Activated CD4-positive, alpha-beta T cell treated with anti-CD3 and anti-CD28 coated beads for 36 hours (primary cell): ENCODE measurements at regions of chr2 and their contacts with region 1.

Region 1: GRCh38 chr2:7427293-7428060 is 510.3 kb downstream of the RNF144A start:
- DNase-seq: no peak
- ATAC-seq: no peak
- H3K4me3 Mint-ChIP-seq: no peak overlapping the region
- H3K27ac Mint-ChIP-seq: peak overlapping the region; percentile 51
- H3K4me1 Mint-ChIP-seq: peaks cover 41% of the 10 kb centered on the region
- H3K27me3 Mint-ChIP-seq: peaks cover 9% of the 10 kb centered on the region

Region 2: DNA sequence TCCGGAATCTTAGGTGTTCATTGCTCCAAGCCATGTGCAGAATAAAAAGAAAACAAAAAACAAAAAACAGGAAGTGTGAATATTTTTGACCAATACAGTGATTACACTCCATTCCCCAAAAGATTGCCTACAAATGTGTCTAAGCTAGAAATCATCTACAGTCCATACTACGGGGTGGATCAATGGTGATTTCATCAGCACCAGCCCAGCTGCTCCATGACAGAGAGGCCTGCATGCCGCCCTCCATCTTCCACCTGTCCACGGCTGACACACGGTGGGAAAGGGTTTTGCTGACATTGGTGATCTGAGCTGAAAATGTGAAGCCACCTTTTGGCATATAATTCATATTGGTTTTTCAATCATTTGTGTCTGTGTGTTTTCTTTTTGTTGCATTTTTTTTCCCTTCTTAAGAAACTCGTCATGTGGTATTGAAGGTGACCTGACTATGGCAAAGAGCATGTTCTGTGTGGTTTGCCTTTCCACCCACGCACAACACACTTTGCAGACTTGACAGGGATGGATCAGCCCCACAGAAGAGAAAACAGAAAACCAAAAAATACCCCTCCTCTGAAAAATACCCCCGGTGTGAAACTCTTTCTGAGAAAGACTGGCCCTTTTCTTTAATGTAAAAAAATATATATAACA is 22.8 kb after region 1 on chr2:
- CTCF ChIA-PET with region 1: interaction called, 10 read pairs
- POLR2A ChIA-PET with region 1: interaction called, 6 read pairs
- intact Hi-C with region 1: no loop called
- DNase-seq: peak; percentile 83
- ATAC-seq: peak; percentile 84
- H3K4me3 Mint-ChIP-seq: peak overlapping the region; percentile 36
- H3K27ac Mint-ChIP-seq: peak overlapping the region; percentile 89
- H3K4me1 Mint-ChIP-seq: peaks cover 74% of the 10 kb centered on the region
- H3K27me3 Mint-ChIP-seq: no peaks in the 10 kb centered on the region

Region 3: DNA sequence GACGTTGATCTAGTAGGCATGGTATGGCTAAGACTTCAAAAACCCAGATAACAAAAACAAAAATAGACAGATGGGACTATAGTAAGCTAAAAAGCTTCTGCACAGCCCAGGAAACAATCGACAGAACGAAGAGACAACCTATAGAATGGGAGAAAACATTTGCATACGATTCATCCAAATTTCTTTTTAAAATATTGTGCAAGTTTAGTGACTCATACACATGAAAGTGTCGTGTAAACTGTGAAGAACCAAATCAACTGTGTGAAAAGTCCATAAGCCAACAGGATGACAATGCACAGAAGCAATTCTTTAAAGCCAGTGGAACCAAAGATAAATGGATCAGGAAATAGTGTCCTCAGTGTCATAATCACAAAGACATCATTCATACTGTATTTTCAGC is 160.8 kb after region 1 on chr2:
- CTCF ChIA-PET with region 1: interaction called, 4 read pairs
- POLR2A ChIA-PET with region 1: no interaction called
- intact Hi-C with region 1: loop called in 1 of 2 experiments (anchors 5 kb)
- DNase-seq: no peak
- ATAC-seq: peak; percentile 71
- H3K4me3 Mint-ChIP-seq: no peak overlapping the region
- H3K27ac Mint-ChIP-seq: peak overlapping the region; percentile 71
- H3K4me1 Mint-ChIP-seq: peaks cover 41% of the 10 kb centered on the region
- H3K27me3 Mint-ChIP-seq: no peaks in the 10 kb centered on the region

Region 4: GRCh38 chr2:7748717-7749415 is 321.4 kb after region 1 on chr2:
- CTCF ChIA-PET with region 1: no interaction called
- POLR2A ChIA-PET with region 1: no interaction called
- intact Hi-C with region 1: loop called in 1 of 2 experiments (anchors 5 kb)
- DNase-seq: peak; percentile 56
- ATAC-seq: peak; percentile 81
- H3K4me3 Mint-ChIP-seq: no peak overlapping the region
- H3K27ac Mint-ChIP-seq: no peak overlapping the region
- H3K4me1 Mint-ChIP-seq: peaks cover 11% of the 10 kb centered on the region
- H3K27me3 Mint-ChIP-seq: no peaks in the 10 kb centered on the region

Region 5: DNA sequence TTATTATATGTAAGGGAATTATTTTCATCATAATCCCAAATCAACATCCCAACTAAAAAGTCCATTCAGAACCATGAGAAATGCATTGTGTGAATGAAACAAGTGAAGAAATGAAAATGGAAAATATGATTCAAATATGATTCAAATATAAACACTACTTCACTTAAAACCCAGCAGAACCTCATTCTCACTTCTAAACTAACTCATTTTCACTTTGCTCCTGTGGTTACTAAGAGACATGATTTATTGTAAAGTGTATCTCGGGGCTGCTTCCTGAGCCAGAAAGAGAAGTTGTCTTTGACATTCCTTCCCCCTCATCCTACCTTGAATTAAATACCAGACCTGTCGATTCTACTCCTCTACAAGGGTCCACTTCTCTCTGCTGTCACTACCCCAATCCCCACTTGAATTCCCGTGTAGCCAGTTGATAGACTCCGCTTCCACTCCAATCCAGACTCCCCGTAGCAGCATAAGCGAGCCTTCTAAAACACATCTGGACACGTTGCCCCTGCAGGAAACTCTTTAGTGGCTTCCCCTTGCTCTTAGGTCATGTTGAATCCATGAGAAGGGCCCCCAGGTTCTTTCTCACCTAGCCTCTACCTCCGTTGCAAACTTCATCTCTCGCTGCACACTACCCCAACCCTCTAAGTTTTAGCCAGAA is 557.3 kb after region 1 on chr2:
- CTCF ChIA-PET with region 1: interaction called, 3 read pairs
- POLR2A ChIA-PET with region 1: no interaction called
- intact Hi-C with region 1: loop called in 1 of 2 experiments (anchors 5 kb)
- DNase-seq: no peak
- ATAC-seq: peak; percentile 96
- H3K4me3 Mint-ChIP-seq: peak overlapping the region; percentile 44
- H3K27ac Mint-ChIP-seq: peak overlapping the region; percentile 95
- H3K4me1 Mint-ChIP-seq: peaks cover 33% of the 10 kb centered on the region
- H3K27me3 Mint-ChIP-seq: no peaks in the 10 kb centered on the region

Region 6: DNA sequence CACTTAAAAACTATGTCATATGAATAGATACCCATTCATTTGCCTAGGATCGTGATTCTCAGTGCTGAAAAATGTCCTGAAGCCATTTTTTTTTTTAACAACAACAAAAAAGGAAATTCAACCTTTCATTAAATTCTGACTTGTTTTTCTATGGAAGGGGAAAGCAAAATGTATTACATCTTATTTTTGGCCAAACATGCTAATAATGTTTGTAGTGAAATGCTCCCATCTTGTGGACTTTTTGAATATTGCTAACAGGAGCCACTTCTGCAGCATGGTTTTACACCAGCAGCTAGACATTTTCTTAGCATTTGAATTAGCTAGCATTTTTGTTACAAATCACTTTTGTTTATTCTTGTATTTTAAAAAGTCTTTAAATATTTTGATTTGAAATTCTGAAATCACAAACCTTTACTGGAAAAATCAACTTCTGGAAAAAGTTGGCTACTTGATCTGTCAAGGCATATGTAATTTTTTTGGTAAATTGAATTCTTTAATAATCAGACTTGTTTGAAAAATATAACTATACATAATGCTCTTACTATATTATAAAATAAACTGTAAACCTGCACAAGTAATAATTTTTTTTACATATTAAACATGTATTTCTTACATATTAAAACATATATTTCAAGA is 1334.2 kb after region 1 on chr2:
- CTCF ChIA-PET with region 1: no interaction called
- POLR2A ChIA-PET with region 1: no interaction called
- intact Hi-C with region 1: loop called in 1 of 2 experiments (anchors 5 kb)
- DNase-seq: no peak
- ATAC-seq: no peak
- H3K4me3 Mint-ChIP-seq: no peak overlapping the region
- H3K27ac Mint-ChIP-seq: no peak overlapping the region
- H3K4me1 Mint-ChIP-seq: no peaks in the 10 kb centered on the region
- H3K27me3 Mint-ChIP-seq: no peaks in the 10 kb centered on the region